IMR-90 (cell line): ENCODE measurements at regions of chr3 and their contacts with region 1.

Region 1: DNA sequence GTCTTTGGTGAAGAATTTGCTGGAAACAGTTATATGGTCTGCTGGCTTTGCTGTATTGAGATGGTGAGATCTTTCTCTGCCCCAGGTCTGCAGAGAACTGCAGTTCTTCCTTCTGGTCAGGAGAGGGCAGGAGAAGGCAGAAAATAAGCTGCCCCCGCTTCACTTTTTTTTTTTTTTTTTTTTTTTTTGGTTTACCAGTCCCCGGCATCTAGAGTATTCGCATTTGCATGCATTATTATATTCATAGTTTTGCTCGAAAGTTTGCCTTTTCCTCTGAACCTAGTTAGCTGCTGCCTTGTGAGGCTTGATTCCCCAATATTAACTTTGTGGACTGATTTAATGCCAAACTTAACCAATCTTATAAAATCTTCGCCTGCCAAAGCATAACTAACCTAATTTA is 10.6 kb upstream of the PARL start:
- DNase-seq: peak; percentile 55
- ATAC-seq: peak; percentile 94
- H3K4me3 ChIP-seq: no peak overlapping the region
- H3K27ac ChIP-seq: no peak overlapping the region
- H3K4me1 ChIP-seq: no peaks in the 10 kb centered on the region
- H3K27me3 ChIP-seq: peaks cover 32% of the 10 kb centered on the region
- CTCF ChIP-seq: peak; percentile 92
- POLR2A ChIP-seq: 0 out of 2 replicates have a peak, but pooled peaks have one; percentile 21
- RAD21 ChIP-seq: peak; percentile 92

Region 2: DNA sequence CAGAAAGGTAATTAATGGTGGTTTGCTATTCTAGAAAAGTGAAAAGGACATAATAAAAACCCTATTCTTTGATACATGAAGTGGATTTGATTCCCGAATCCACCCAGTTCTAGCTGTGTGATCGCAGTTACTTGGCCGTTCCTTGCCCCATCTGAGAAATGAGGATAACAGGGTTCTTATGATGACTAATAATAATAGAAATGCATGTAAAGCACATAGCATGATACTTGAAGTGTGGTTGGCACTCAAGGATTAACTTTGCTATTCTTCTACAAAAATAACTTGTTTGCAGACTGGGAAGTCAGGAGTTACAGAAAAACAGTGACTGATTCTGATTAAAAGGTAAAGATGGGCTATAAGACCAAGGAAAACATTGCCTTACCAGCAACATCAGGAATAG is 37.4 kb before region 1 on chr3:
- CTCF ChIA-PET with region 1: no interaction called
- POLR2A ChIA-PET with region 1: no interaction called
- dilution Hi-C with region 1: no loop called
- in situ Hi-C with region 1: no loop called
- intact Hi-C with region 1: no loop called
- DNase-seq: no peak
- ATAC-seq: no peak; the same call in 1 of the 2 replicates
- H3K4me3 ChIP-seq: no peak overlapping the region
- H3K27ac ChIP-seq: no peak overlapping the region
- H3K4me1 ChIP-seq: no peaks in the 10 kb centered on the region
- H3K27me3 ChIP-seq: no peaks in the 10 kb centered on the region
- CTCF ChIP-seq: no peak
- POLR2A ChIP-seq: no peak
- RAD21 ChIP-seq: no peak

Region 3: GRCh38 chr3:184017672-184018423 is 122.6 kb after region 1 on chr3 and contains the start of gene ABCC5:
- CTCF ChIA-PET with region 1: interaction called, 3 read pairs
- POLR2A ChIA-PET with region 1: interaction called, 3 read pairs
- dilution Hi-C with region 1: no loop called
- in situ Hi-C with region 1: loop called (anchors 10 kb)
- intact Hi-C with region 1: loop called (anchors 1 kb)
- DNase-seq: peak; percentile 91
- ATAC-seq: peak; percentile 99
- H3K4me3 ChIP-seq: peak within 1 kb of the TSS; percentile 57
- H3K27ac ChIP-seq: peak within 1 kb of the TSS; percentile 82
- H3K4me1 ChIP-seq: peaks cover 7% of the 10 kb centered on the region
- H3K27me3 ChIP-seq: 0 out of 2 replicates have a peak, but pooled peaks cover 1% of the 10 kb centered on the region
- CTCF ChIP-seq: no peak
- POLR2A ChIP-seq: 0 out of 2 replicates have a peak, but pooled peaks have one; percentile 24
- RAD21 ChIP-seq: no peak
- total RNA-seq, gene ABCC5: 8.4 and 9.2 TPM in 2 replicates

Region 4: DNA sequence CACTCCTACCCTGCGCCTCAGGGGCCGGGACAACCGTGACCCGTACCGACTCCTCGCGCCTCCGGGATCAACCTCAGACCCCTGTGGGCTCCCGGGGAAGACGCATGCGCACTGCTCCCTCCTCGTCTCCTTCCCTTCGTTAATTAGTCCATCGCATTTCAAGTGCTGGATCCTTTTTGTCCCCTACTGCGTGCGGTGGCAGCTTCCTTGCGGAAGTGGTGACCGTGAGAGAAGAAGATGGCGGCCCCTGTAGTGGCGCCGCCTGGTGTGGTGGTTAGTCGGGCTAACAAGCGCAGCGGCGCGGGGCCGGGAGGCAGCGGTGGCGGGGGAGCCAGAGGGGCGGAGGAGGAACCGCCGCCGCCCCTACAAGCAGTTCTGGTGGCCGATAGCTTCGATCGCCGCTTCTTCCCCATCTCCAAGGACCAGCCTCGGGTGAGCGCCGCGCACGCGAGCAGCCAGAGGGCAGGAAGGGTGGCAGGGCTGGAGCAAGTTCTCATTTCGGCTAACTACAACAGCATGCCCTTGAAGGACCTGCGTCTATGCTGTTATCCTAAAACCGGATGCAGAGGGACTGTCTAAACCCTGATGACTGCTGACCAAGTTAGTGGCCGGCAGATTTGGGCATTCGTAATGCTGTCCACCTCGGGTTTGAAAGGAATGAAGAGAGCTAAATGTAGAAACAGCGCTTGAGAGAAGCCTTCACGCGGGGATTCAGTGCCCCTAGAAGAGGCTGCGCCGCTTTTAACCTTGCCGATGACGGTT is 240.0 kb after region 1 on chr3 and contains the start of gene EIF2B5:
- CTCF ChIA-PET with region 1: no interaction called
- POLR2A ChIA-PET with region 1: no interaction called
- dilution Hi-C with region 1: no loop called
- in situ Hi-C with region 1: no loop called
- intact Hi-C with region 1: loop called (anchors 1 kb)
- DNase-seq: peak; percentile 91
- ATAC-seq: peak; percentile 87
- H3K4me3 ChIP-seq: peak within 1 kb of the TSS; percentile 91
- H3K27ac ChIP-seq: peak within 1 kb of the TSS; percentile 87
- H3K4me1 ChIP-seq: no peaks in the 10 kb centered on the region; the same call in 1 of the 2 replicates
- H3K27me3 ChIP-seq: no peaks in the 10 kb centered on the region
- CTCF ChIP-seq: peak; percentile 47
- POLR2A ChIP-seq: peak; percentile 71
- RAD21 ChIP-seq: peak; percentile 33
- total RNA-seq, gene EIF2B5: 32.5 and 37.6 TPM in 2 replicates

Region 5: GRCh38 chr3:184174646-184175492 is 279.6 kb after region 1 on chr3 and contains the start of gene AP2M1:
- CTCF ChIA-PET with region 1: no interaction called
- POLR2A ChIA-PET with region 1: no interaction called
- dilution Hi-C with region 1: no loop called
- in situ Hi-C with region 1: no loop called
- intact Hi-C with region 1: loop called (anchors 5 kb)
- DNase-seq: peak; percentile 100
- ATAC-seq: peak; percentile 73
- H3K4me3 ChIP-seq: peak within 1 kb of the TSS; percentile 86
- H3K27ac ChIP-seq: peak within 1 kb of the TSS; percentile 96
- H3K4me1 ChIP-seq: peaks cover 19% of the 10 kb centered on the region
- H3K27me3 ChIP-seq: no peaks in the 10 kb centered on the region
- CTCF ChIP-seq: no peak
- POLR2A ChIP-seq: peak; percentile 65; the same call in 1 of the 2 replicates
- RAD21 ChIP-seq: no peak
- total RNA-seq, gene AP2M1: 855 and 876 TPM in 2 replicates

Region 6: DNA sequence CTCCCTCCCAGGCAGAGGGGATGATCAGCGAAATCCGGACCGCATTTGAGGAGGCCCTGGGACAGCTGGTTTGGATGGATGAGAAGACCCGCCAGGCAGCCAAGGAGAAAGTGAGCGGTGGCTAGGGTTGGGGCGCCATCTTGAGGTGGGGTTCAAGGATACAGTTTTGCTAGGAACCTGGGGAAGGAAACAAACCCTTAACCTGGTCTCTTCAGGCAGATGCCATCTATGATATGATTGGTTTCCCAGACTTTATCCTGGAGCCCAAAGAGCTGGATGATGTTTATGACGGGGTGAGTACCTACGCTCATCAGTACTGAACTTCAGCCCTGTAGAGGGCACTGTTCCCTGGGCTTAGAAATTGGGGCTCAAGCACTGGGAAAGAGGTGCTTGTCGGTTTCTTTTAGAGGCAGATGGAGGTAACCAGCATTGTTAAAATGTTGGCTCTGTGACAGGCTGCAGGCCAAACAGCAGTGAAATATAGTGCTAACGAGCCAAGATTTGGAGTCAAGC is 394.2 kb after region 1 on chr3:
- CTCF ChIA-PET with region 1: no interaction called
- POLR2A ChIA-PET with region 1: no interaction called
- dilution Hi-C with region 1: no loop called
- in situ Hi-C with region 1: loop called (anchors 10 kb)
- intact Hi-C with region 1: loop called (anchors 1 kb)
- DNase-seq: peak; percentile 38
- ATAC-seq: peak; percentile 79
- H3K4me3 ChIP-seq: no peak overlapping the region
- H3K27ac ChIP-seq: no peak overlapping the region
- H3K4me1 ChIP-seq: no peaks in the 10 kb centered on the region
- H3K27me3 ChIP-seq: peaks cover 24% of the 10 kb centered on the region
- CTCF ChIP-seq: peak; percentile 65
- POLR2A ChIP-seq: no peak
- RAD21 ChIP-seq: peak; percentile 82